Activated CD4-positive, alpha-beta T cell treated with anti-CD3 and anti-CD28 coated beads for 36 hours (primary cell): ENCODE measurements at regions of chr10 and their contacts with region 1.

Region 1: GRCh38 chr10:3757638-3758490 is 27.1 kb downstream of the KLF6 start:
- DNase-seq: peak; percentile 80
- ATAC-seq: peak; percentile 80
- H3K4me3 Mint-ChIP-seq: peak overlapping the region; percentile 66
- H3K27ac Mint-ChIP-seq: peak overlapping the region; percentile 99
- H3K4me1 Mint-ChIP-seq: peaks cover 80% of the 10 kb centered on the region
- H3K27me3 Mint-ChIP-seq: no peaks in the 10 kb centered on the region

Region 2: GRCh38 chr10:3226960-3227744 is 530.7 kb before region 1 on chr10:
- CTCF ChIA-PET with region 1: no interaction called
- POLR2A ChIA-PET with region 1: no interaction called
- intact Hi-C with region 1: loop called in 1 of 2 experiments (anchors 5 kb)
- DNase-seq: no peak
- ATAC-seq: peak; percentile 18
- H3K4me3 Mint-ChIP-seq: no peak overlapping the region
- H3K27ac Mint-ChIP-seq: no peak overlapping the region
- H3K4me1 Mint-ChIP-seq: peaks cover 20% of the 10 kb centered on the region
- H3K27me3 Mint-ChIP-seq: peaks cover 8% of the 10 kb centered on the region

Region 3: DNA sequence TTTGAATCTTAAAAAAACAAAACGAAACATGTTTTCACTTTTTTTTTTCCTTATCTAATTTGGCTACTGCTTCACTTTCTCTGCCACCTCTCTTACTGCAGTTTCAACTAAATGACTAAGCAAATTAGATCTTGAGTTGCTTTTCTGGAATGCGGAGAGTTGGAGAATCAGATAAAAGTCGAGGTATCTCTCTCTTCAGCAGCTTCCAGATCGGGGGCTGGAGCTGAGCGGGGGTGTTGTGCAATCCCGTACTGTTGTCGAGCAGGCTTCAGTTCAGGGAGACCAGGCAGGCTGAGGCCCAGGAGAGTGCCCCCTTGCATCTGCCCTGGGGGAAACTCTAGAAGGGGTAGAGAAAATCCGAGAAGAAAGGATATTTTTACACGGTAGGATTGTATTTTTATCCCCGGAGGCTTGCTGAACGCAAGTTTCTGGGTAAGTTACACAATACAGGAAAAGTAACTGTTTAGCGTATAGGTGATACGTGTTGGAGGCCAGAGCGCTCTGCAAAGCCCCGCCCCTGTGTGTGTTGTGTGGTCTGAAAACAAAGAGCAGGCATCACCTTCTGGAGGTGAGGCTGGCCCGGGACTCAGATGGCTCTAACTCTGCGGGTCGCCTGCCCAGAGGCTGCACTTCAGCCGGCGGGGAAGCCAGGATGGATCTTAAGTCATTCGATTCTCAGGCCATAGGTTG is 89.4 kb before region 1 on chr10:
- CTCF ChIA-PET with region 1: no interaction called
- POLR2A ChIA-PET with region 1: no interaction called
- intact Hi-C with region 1: loop called in 1 of 2 experiments (anchors 5 kb)
- DNase-seq: peak; percentile 79
- ATAC-seq: peak; percentile 90
- H3K4me3 Mint-ChIP-seq: peak overlapping the region; percentile 67
- H3K27ac Mint-ChIP-seq: peak overlapping the region; percentile 81
- H3K4me1 Mint-ChIP-seq: peaks cover 41% of the 10 kb centered on the region
- H3K27me3 Mint-ChIP-seq: no peaks in the 10 kb centered on the region

Region 4: GRCh38 chr10:3740157-3740871 is 17.6 kb before region 1 on chr10:
- CTCF ChIA-PET with region 1: interaction called, 9 read pairs
- POLR2A ChIA-PET with region 1: interaction called, 15 read pairs
- intact Hi-C with region 1: loop called (anchors 1 kb)
- DNase-seq: peak; percentile 38
- ATAC-seq: peak; percentile 85
- H3K4me3 Mint-ChIP-seq: no peak overlapping the region
- H3K27ac Mint-ChIP-seq: peak overlapping the region; percentile 60
- H3K4me1 Mint-ChIP-seq: peaks cover 33% of the 10 kb centered on the region
- H3K27me3 Mint-ChIP-seq: no peaks in the 10 kb centered on the region

Region 5: DNA sequence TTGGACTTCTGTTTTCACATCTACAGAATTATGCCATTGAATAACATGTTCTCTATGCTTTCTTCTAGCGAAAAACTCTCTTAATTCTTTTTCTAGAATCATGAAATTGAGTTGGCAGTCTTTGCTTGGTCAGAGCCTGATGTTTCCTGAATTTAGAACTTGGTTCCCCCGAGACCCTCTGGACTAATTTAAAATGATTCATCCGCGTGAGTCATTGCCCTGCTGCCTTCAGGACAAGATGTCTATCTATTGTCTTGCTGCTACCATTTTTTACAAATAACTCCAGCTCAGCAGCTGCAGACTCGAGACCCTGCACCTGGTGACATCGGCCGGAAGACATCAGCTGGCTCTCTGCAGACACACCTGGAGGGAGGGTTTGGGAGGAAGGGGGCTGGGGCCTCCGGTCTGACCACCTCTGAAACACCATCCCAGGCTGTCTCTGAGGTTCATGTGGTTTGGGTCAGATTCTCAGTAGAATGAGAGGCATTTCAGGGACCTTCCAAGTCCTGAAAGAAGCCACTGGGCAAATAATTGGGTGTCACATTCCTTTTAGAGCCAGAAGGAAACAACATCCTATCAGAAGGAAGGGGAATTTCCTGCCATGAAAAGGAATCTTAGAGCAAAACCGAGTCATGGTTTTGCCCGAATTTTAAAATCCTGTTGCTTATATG is 48.1 kb after region 1 on chr10:
- CTCF ChIA-PET with region 1: interaction called, 3 read pairs
- POLR2A ChIA-PET with region 1: interaction called, 19 read pairs
- intact Hi-C with region 1: loop called (anchors 1 kb)
- DNase-seq: peak; percentile 59
- ATAC-seq: no peak
- H3K4me3 Mint-ChIP-seq: peak overlapping the region; percentile 46
- H3K27ac Mint-ChIP-seq: no peak overlapping the region
- H3K4me1 Mint-ChIP-seq: peaks cover 63% of the 10 kb centered on the region
- H3K27me3 Mint-ChIP-seq: no peaks in the 10 kb centered on the region

Region 6: DNA sequence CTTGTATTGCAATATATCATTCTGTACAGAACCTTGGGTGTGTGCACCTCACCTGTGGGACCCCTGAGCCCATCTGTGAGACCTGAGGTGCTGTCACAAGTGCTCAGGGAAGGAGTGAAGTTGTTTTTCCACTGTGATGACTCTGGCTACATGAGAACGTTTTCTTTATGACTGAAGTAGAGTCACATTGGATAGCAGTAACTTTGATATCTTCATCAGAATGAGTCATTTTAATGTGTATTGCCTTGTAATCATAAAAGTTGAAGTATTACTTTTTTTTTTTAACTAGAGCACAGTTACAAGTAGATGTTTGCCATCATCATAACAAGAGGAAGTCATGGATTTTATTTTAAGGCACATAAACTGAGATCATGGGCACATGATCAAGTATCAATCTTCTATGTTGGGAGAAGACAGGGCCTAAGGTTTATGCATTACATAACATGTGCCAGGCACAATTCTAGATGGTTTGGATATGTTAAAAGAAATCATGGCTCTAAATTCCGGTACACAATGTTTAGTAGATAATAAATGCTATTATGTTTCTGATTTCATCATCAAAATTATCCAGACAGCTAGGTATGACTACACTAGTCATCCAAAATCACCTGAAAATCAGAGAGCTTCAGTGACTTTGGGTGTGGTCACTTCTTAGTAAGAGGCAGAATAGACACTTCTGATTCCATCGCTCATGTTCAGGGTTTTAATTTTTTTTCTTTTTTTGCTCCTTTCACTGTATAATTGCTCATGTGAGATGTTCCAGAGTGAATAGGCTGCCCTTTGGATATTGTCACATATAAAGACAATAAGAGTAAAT is 109.8 kb after region 1 on chr10:
- CTCF ChIA-PET with region 1: no interaction called
- POLR2A ChIA-PET with region 1: interaction called, 3 read pairs
- intact Hi-C with region 1: loop called in 1 of 2 experiments (anchors 2 kb)
- DNase-seq: peak; percentile 60
- ATAC-seq: peak; percentile 76
- H3K4me3 Mint-ChIP-seq: peak overlapping the region; percentile 10
- H3K27ac Mint-ChIP-seq: peak overlapping the region; percentile 81
- H3K4me1 Mint-ChIP-seq: peaks cover 69% of the 10 kb centered on the region
- H3K27me3 Mint-ChIP-seq: no peaks in the 10 kb centered on the region

Region 7: GRCh38 chr10:4034907-4035598 is 277.2 kb after region 1 on chr10:
- CTCF ChIA-PET with region 1: no interaction called
- POLR2A ChIA-PET with region 1: no interaction called
- intact Hi-C with region 1: loop called in 1 of 2 experiments (anchors 1 kb)
- DNase-seq: peak; percentile 64
- ATAC-seq: peak; percentile 63
- H3K4me3 Mint-ChIP-seq: peak overlapping the region; percentile 49
- H3K27ac Mint-ChIP-seq: peak overlapping the region; percentile 90
- H3K4me1 Mint-ChIP-seq: peaks cover 30% of the 10 kb centered on the region
- H3K27me3 Mint-ChIP-seq: no peaks in the 10 kb centered on the region